ENCODE measurements at regions of chr20 and their contacts with region 1.

Region 1: DNA sequence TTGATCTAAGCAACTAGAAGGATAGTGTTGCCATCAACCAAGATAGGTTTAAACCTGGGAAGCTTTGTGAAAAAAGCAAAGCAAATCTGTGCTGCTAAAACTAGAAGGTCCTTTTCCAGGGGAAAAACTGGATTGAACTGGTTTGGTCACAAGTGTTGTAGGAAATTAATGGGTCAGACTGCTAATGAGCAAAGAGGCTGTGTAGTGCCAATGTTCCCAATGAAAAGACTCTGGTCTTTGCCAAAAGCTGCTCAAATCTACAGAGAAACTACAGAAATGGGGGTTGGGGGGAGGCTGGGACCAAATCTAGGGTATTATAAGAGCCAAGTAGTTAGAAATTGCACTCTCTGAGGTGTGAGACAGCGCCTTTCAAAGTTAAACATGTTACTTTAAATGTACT is 85.0 kb downstream of the PLCG1 start:
- DNase-seq: no peak
- H3K4me3 ChIP-seq: no peak overlapping the region
- H3K4me3 Mint-ChIP-seq: no peak overlapping the region
- H3K27ac ChIP-seq: no peak overlapping the region
- H3K27ac Mint-ChIP-seq: no peak overlapping the region
- H3K4me1 ChIP-seq: no peaks in the 10 kb centered on the region
- H3K4me1 Mint-ChIP-seq: no peaks in the 10 kb centered on the region
- H3K27me3 ChIP-seq: no peaks in the 10 kb centered on the region
- H3K27me3 Mint-ChIP-seq: no peaks in the 10 kb centered on the region

Region 2: GRCh38 chr20:41232973-41233926 is 11.0 kb after region 1 on chr20:
- CTCF ChIA-PET with region 1: interaction called, 10 read pairs
- POLR2A ChIA-PET with region 1: no interaction called
- DNase-seq: no peak
- H3K4me3 ChIP-seq: no peak overlapping the region
- H3K4me3 Mint-ChIP-seq: no peak overlapping the region
- H3K27ac ChIP-seq: no peak overlapping the region
- H3K27ac Mint-ChIP-seq: peak overlapping the region in 2 of 8 donors; percentile 5 to 29
- H3K4me1 ChIP-seq: peaks cover 7% of the 10 kb centered on the region
- H3K4me1 Mint-ChIP-seq: peaks cover 16 to 22% (median 18%) of the 10 kb centered on the region in 3 donors
- H3K27me3 ChIP-seq: no peaks in the 10 kb centered on the region
- H3K27me3 Mint-ChIP-seq: no peaks in the 10 kb centered on the region

Measured in CD8-positive, alpha-beta memory T cell (primary cell).